Caco-2 (cell line): ENCODE measurements at regions of chr5 and their contacts with region 1.

Region 1: GRCh38 chr5:16881251-16881650 is 54.8 kb downstream of the MYO10 start:
- DNase-seq: peak; percentile 80 to 85
- H3K4me3 ChIP-seq: no peak overlapping the region; the same call in 1 of the 2 replicates
- H3K4me3 Mint-ChIP-seq: peak overlapping the region; percentile 73
- H3K27ac Mint-ChIP-seq: peak overlapping the region; percentile 90
- H3K4me1 ChIP-seq: peaks cover 80% of the 10 kb centered on the region
- H3K4me1 Mint-ChIP-seq: peaks cover 53% of the 10 kb centered on the region
- H3K27me3 ChIP-seq: no peaks in the 10 kb centered on the region
- H3K27me3 Mint-ChIP-seq: no peaks in the 10 kb centered on the region
- CTCF ChIP-seq: no peak

Region 2: DNA sequence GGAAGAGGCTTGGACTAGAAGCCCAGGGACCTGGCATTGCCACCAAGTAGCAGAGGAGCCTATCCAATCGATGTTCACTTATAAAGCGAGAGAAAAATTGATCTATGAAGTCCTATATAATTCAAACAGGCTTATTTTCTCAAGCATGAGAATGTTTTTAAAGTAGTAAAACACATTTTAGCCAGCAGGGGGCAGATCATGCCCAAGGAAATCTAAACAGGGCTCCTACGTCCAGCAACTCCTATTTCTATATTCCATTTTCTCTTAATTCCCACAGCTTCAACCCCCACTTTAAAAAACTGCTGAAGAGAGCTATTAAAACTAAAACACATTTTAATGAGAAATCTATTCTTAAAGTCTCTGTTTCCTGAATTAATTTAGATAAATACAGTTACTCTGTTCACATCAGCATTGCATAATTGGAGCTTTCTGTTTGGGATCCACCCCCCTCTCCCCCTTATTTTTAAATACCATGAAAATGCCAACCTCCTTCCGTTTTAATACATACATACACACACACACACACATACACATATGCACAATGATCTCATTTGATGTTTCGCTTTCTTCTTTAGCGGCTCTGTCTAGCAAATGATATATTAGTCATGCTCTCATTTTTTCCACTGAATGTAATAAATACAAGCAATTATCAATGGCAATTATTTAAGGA is 90.1 kb before region 1 on chr5:
- CTCF ChIA-PET with region 1: interaction called, 3 read pairs
- POLR2A ChIA-PET with region 1: no interaction called
- intact Hi-C with region 1: loop called (anchors 1 kb)
- DNase-seq: peak in 1 of 2 experiments; percentile 63
- H3K4me3 ChIP-seq: no peak overlapping the region
- H3K4me3 Mint-ChIP-seq: no peak overlapping the region
- H3K27ac Mint-ChIP-seq: no peak overlapping the region
- H3K4me1 ChIP-seq: no peaks in the 10 kb centered on the region
- H3K4me1 Mint-ChIP-seq: no peaks in the 10 kb centered on the region
- H3K27me3 ChIP-seq: no peaks in the 10 kb centered on the region; the same call in 1 of the 2 replicates
- H3K27me3 Mint-ChIP-seq: no peaks in the 10 kb centered on the region
- CTCF ChIP-seq: peak; percentile 65 to 73

Region 3: GRCh38 chr5:16842896-16843295 is 38.4 kb before region 1 on chr5:
- CTCF ChIA-PET with region 1: no interaction called
- POLR2A ChIA-PET with region 1: no interaction called
- intact Hi-C with region 1: loop called (anchors 5 kb)
- DNase-seq: no peak
- H3K4me3 ChIP-seq: no peak overlapping the region
- H3K4me3 Mint-ChIP-seq: no peak overlapping the region
- H3K27ac Mint-ChIP-seq: no peak overlapping the region
- H3K4me1 ChIP-seq: no peaks in the 10 kb centered on the region
- H3K4me1 Mint-ChIP-seq: peaks cover 17% of the 10 kb centered on the region
- H3K27me3 ChIP-seq: no peaks in the 10 kb centered on the region
- H3K27me3 Mint-ChIP-seq: no peaks in the 10 kb centered on the region
- CTCF ChIP-seq: no peak

Region 4: DNA sequence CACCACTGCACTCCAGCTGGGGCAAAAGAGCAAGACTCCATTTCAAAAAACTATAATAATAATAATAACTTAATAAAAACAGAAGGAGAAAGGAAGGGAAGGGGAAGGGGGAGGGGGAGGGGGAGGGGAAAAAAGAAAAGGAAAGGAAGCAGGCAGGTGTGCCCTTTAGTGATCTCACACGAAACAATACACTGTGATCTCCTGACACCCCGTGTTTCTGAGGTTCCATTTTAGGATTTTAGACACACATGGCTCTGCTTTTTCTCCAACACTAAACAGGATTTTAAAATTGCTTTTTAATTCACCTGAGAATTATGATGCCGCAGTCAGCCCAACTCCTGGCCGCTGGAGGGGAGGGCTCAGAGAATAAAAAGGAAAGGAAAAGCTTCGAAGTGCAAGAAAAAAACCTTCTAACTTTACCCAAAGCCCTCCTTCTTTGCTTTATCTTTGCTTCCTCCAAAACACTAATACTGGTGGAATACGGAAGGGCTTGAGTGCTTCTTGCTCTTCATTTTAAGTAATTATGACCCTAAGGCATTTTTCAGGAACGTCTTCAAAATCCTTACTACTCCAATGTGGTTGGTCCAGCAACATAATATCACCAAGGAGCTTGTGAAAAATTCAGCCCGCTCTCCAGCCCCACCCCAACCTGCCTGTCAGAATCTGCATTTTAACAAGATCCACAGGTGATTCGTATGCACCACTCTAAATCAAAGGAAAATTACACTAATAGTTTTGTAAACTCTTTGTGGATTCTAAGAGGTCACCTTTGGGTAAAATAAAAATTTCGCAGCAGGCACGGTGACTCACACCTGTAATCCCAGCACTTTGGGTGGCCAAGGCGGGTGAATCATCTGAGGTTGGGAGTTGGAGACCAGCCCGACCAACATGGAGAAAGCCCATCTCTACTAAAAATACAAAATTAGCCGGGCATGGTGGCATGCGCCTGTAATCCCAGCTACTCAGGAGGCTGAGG is 11.1 kb before region 1 on chr5:
- CTCF ChIA-PET with region 1: no interaction called
- POLR2A ChIA-PET with region 1: no interaction called
- intact Hi-C with region 1: no loop called
- DNase-seq: no peak
- H3K4me3 ChIP-seq: no peak overlapping the region
- H3K4me3 Mint-ChIP-seq: no peak overlapping the region
- H3K27ac Mint-ChIP-seq: no peak overlapping the region
- H3K4me1 ChIP-seq: peaks cover 15% of the 10 kb centered on the region
- H3K4me1 Mint-ChIP-seq: peaks cover 23% of the 10 kb centered on the region
- H3K27me3 ChIP-seq: no peaks in the 10 kb centered on the region
- H3K27me3 Mint-ChIP-seq: no peaks in the 10 kb centered on the region
- CTCF ChIP-seq: no peak

Region 5: DNA sequence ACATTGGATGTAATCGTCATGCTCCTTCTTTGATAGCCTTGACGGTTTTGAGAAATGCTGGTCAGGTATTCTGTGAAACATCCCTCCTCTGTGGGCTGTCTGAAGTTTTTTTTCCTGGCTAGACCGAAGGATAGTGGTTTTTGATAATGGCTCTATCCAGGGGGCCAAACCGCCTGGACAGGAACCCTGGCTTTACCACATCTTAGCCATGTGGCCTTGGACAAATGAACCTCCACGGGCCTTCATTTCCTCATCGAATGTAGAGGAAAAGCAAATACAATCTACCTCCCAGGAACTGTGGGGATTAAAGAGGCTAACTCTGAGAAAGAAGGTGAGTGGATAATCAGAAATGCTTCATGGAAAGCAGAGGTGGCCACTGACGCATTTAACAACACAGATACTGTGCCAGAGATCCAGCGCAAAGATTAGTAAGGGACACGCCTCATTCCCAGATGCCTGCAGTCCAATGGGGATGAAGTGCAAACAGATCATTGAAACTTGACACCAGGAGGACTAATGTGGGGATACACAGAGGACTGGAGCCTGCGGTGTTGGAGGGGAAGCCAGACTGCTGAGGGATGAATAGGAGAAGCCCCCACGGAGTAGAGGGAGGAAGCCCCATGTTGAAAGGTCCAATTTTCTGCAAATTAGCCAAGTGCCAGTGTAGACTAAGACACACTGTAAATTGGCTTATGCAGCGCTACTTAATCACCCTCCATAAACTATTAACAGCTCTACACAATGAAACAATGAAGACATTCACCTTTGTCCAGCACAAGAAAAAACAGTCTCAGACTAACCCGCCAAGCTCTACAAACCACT is 13.2 kb after region 1 on chr5:
- CTCF ChIA-PET with region 1: interaction called, 5 read pairs
- POLR2A ChIA-PET with region 1: no interaction called
- intact Hi-C with region 1: loop called (anchors 1 kb)
- DNase-seq: peak; percentile 81 to 87
- H3K4me3 ChIP-seq: peak overlapping the region; percentile 5; the same call in 1 of the 2 replicates
- H3K4me3 Mint-ChIP-seq: peak overlapping the region; percentile 66
- H3K27ac Mint-ChIP-seq: peak overlapping the region; percentile 88
- H3K4me1 ChIP-seq: peaks cover 90% of the 10 kb centered on the region
- H3K4me1 Mint-ChIP-seq: peaks cover 70% of the 10 kb centered on the region
- H3K27me3 ChIP-seq: no peaks in the 10 kb centered on the region
- H3K27me3 Mint-ChIP-seq: no peaks in the 10 kb centered on the region
- CTCF ChIP-seq: no peak

Region 6: DNA sequence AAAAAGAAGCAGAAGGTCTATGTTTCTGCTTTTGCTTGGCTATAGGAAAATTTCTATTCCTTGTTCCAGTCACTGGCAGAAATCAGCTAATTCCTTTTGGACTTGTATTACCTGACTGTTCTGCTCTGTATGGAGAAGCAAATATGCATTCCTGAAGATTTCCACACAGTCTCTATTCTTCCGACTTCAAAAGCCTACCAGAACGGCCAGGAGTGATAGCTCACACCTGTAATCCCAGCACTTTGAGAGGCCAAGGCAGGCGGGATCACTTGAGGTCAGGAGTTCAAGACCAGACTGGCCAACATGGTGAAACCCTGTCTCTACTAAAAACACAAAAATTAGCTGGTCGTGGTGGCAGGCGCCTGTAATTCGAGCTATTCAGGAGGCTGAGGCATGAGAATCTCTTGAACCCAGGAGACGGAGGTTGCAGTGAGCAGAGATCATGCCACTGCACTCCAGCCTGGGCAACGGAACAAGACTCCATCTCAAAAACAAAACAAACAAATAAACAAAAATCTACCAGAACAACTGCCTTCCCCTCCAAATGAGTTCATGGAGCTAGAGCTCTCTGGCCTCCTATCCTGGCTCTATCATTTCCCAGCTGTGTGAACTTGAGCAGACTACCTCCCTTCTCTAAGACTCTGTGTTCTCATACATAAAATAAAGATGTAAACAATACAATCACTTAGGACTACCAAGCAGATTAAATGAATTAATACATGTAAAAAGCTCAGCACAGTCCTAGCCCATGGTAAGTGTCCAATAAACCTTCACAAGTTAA is 37.8 kb after region 1 on chr5:
- CTCF ChIA-PET with region 1: no interaction called
- POLR2A ChIA-PET with region 1: no interaction called
- intact Hi-C with region 1: loop called (anchors 1 kb)
- DNase-seq: peak; percentile 70 to 77
- H3K4me3 ChIP-seq: no peak overlapping the region
- H3K4me3 Mint-ChIP-seq: peak overlapping the region; percentile 10
- H3K27ac Mint-ChIP-seq: peak overlapping the region; percentile 56
- H3K4me1 ChIP-seq: peaks cover 28% of the 10 kb centered on the region
- H3K4me1 Mint-ChIP-seq: peaks cover 15% of the 10 kb centered on the region
- H3K27me3 ChIP-seq: no peaks in the 10 kb centered on the region
- H3K27me3 Mint-ChIP-seq: no peaks in the 10 kb centered on the region
- CTCF ChIP-seq: no peak

Region 7: GRCh38 chr5:16992006-16992405 is 110.8 kb after region 1 on chr5:
- CTCF ChIA-PET with region 1: no interaction called
- POLR2A ChIA-PET with region 1: no interaction called
- intact Hi-C with region 1: no loop called
- DNase-seq: no peak
- H3K4me3 ChIP-seq: no peak overlapping the region
- H3K4me3 Mint-ChIP-seq: no peak overlapping the region
- H3K27ac Mint-ChIP-seq: no peak overlapping the region
- H3K4me1 ChIP-seq: peaks cover 16% of the 10 kb centered on the region; the same call in 1 of the 2 replicates
- H3K4me1 Mint-ChIP-seq: peaks cover 23% of the 10 kb centered on the region
- H3K27me3 ChIP-seq: no peaks in the 10 kb centered on the region
- H3K27me3 Mint-ChIP-seq: no peaks in the 10 kb centered on the region
- CTCF ChIP-seq: no peak